Thyroid gland (tissue), 4 donors: ENCODE measurements at regions of chr16 and their contacts with region 1.

Region 1: GRCh38 chr16:31700526-31701388 is 172.8 kb upstream of the ZNF267 start:
- DNase-seq: peak; percentile 96 to 97
- H3K4me3 ChIP-seq: peak overlapping the region; percentile 38 to 66 (median 54)
- H3K27ac ChIP-seq: peak overlapping the region; percentile 39 to 64 (median 47)
- H3K4me1 ChIP-seq: peaks cover 6 to 8% of the 10 kb centered on the region in 2 donors
- H3K27me3 ChIP-seq: no peaks in the 10 kb centered on the region
- CTCF ChIP-seq: peak in 1 of 6 experiments; percentile 13
- POLR2A ChIP-seq: peak in 1 of 2 donors; percentile 71

Region 2: GRCh38 chr16:31873556-31874365 is 173.0 kb after region 1 on chr16 and contains the start of gene ZNF267:
- intact Hi-C with region 1: loop called (anchors 10 kb)
- DNase-seq: peak; percentile 97
- H3K4me3 ChIP-seq: peak within 1 kb of the TSS; percentile 75 to 97 (median 85)
- H3K27ac ChIP-seq: peak within 1 kb of the TSS; percentile 78 to 91 (median 83)
- H3K4me1 ChIP-seq: peaks cover 20 to 47% of the 10 kb centered on the region in 2 donors
- H3K27me3 ChIP-seq: no peaks in the 10 kb centered on the region
- CTCF ChIP-seq: no peak
- POLR2A ChIP-seq: peak in 1 of 2 donors; percentile 78
- total RNA-seq, gene ZNF267: 13.1 to 25.9 (median 16.2) TPM